Heart right ventricle (tissue), 16 donors: ENCODE measurements at regions of chr6 and their contacts with region 1.

Region 1: DNA sequence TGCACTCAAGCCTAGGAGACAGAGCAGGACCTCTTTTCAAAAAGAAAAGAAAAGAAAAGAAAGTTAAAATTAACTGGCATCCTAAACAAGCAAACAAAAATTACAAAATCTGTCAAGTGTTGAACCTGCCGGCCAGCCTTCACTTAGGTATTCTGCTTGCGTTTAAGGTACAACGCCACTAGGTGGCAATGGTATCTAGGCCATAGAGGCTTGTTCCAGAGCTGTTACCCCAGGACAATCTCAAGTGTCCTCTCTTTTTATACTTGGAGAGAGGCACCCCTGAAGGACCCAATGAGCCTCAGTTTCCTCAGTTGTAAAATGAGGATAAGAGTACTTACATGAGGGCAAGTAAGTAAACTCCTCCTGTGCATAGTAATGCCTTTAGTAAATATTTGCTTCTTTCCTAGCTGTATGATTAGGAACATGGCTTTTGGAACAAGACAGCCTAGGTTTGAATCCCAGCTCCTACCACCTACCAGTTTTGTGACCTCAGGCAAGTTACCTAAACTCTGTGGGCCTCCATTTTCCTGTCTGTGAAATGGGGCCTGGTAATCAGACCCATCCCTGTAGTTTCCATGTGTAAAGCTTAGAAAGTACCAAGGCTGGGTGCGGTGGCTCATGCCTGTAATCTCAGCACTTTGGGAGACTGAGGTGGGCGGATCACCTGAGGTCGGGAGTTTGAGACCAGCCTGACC is 5.8 kb upstream of the PACSIN1 start:
- DNase-seq: peak in 1 of 2 donors; percentile 19
- ATAC-seq: peak in 5 of 8 donors; percentile 37 to 51 (median 43)
- H3K4me3 ChIP-seq: no peak overlapping the region
- H3K27ac ChIP-seq: no peak overlapping the region
- H3K4me1 ChIP-seq: peaks cover 0 to 3% (median 0%) of the 10 kb centered on the region in 9 donors
- H3K27me3 ChIP-seq: peaks cover 0 to 15% (median 12%) of the 10 kb centered on the region in 7 donors
- CTCF ChIP-seq: peak; percentile 13 to 75 (median 65)

Region 2: GRCh38 chr6:34680802-34681515 is 220.9 kb after region 1 on chr6:
- intact Hi-C with region 1: no loop called
- DNase-seq: no peak
- ATAC-seq: peak in 1 of 8 donors; percentile 53
- H3K4me3 ChIP-seq: no peak overlapping the region
- H3K27ac ChIP-seq: peak overlapping the region in 1 of 10 donors; percentile 8
- H3K4me1 ChIP-seq: peaks cover 4 to 42% (median 29%) of the 10 kb centered on the region in 9 donors
- H3K27me3 ChIP-seq: no peaks in the 10 kb centered on the region
- CTCF ChIP-seq: no peak

Region 3: GRCh38 chr6:34709386-34709785 is 249.3 kb after region 1 on chr6:
- intact Hi-C with region 1: loop called in 1 of 10 experiments (anchors 10 kb)
- DNase-seq: peak; percentile 79 to 81
- ATAC-seq: peak; percentile 95 to 99 (median 98)
- H3K4me3 ChIP-seq: no peak overlapping the region
- H3K27ac ChIP-seq: peak overlapping the region; percentile 0 to 77 (median 60)
- H3K4me1 ChIP-seq: peaks cover 0 to 27% (median 13%) of the 10 kb centered on the region in 9 donors
- H3K27me3 ChIP-seq: no peaks in the 10 kb centered on the region
- CTCF ChIP-seq: no peak